Motor neuron (in vitro differentiated cells): ENCODE measurements at regions of chr2 and their contacts with region 1.

Region 1: DNA sequence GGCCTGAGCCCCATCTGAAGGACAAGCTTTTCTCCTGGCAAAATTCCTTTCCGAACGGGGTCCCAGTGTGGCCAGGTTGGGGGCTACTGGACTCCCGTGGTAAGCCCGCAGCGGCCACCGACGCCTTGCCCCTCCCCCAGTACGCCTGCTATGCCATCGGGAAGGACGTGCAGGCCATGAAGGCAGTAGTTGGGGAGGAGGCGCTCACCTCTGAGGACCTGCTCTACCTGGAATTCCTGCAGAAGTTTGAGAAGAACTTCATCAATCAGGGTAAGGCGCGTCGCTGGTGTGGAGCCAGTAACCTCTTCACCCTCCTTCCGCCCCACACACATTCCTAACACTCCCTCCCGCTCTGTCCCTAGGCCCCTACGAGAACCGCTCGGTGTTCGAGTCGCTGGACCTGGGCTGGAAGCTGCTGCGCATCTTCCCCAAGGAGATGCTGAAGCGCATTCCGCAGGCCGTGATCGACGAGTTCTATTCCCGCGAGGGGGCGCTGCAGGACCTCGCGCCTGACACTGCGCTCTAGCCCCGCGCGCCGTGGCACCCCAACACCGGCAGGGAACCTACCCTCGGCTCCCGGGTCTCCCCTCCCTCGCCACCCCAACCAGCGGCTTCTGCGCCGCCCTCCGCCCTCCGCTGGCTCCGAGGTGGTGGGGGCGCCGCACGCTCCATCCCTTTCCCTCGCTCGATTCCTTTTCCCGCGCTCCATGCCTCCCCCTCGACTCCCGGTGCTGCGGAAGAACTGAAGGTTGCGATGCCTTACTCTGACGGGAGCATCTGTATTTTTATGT is 13.6 kb upstream of the ANKRD53 start:
- ATAC-seq: peak; percentile 83 to 99 (median 96)
- H3K4me3 ChIP-seq: peak overlapping the region; percentile 25 to 41 (median 35)
- H3K27ac ChIP-seq: no peak overlapping the region
- H3K4me1 ChIP-seq: no peaks in the 10 kb centered on the region

Region 2: GRCh38 chr2:70671092-70671675 is 293.6 kb before region 1 on chr2:
- in situ Hi-C with region 1: loop called in 1 of 9 experiments (anchors 25 kb)
- ATAC-seq: peak in 2 of 8 experiments; percentile 42 to 72
- H3K4me3 ChIP-seq: no peak overlapping the region
- H3K27ac ChIP-seq: no peak overlapping the region
- H3K4me1 ChIP-seq: no peaks in the 10 kb centered on the region

Region 3: DNA sequence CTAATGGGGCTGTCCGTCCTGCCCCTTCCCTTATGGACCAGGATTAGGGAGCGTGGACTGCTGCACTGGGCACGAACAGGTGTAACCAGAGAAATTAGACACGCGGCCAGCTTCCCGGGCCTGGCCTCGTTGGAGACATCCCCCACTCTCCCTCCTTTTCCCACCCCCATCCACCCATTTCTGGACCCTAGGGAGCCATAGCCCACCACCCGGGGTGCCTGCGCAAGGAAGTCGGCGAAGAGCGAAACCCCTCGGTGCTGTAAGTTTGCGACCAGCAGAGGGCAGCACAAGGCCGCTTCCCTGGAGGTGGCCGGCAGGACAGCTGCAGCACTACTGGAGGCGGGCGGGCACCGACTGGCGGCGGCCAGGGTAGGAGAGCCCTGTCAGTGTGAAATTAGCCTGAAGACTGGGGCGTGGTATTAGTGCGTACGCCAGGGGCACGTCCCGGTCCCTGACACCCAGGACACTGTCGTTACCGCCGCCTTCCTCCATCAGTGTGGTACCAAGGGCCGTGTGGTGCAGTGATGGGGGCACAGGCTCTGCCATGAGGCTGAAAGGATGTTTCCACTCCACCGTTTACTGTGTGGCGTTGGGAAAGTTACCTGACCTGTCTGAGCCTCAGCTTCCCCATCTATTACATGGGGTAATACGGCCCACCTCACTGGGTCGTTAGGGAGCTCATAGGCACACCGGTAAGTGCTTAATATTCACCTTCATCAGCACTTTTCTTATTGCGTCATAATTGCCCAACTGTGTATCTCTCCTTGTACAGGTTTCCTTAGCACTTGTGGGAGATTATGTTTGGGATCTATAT is 93.2 kb before region 1 on chr2:
- in situ Hi-C with region 1: loop called in 3 of 9 experiments (anchors 25 kb)
- ATAC-seq: peak; percentile 96 to 99 (median 99)
- H3K4me3 ChIP-seq: peak overlapping the region in 1 of 5 donors; percentile 5
- H3K27ac ChIP-seq: no peak overlapping the region
- H3K4me1 ChIP-seq: peaks cover 0 to 4% of the 10 kb centered on the region in 2 donors